Activated B cell treated with CpG ODN at 0.5 μM for 24 hours (primary cell): ENCODE measurements at regions of chr3 and their contacts with region 1.

Region 1: DNA sequence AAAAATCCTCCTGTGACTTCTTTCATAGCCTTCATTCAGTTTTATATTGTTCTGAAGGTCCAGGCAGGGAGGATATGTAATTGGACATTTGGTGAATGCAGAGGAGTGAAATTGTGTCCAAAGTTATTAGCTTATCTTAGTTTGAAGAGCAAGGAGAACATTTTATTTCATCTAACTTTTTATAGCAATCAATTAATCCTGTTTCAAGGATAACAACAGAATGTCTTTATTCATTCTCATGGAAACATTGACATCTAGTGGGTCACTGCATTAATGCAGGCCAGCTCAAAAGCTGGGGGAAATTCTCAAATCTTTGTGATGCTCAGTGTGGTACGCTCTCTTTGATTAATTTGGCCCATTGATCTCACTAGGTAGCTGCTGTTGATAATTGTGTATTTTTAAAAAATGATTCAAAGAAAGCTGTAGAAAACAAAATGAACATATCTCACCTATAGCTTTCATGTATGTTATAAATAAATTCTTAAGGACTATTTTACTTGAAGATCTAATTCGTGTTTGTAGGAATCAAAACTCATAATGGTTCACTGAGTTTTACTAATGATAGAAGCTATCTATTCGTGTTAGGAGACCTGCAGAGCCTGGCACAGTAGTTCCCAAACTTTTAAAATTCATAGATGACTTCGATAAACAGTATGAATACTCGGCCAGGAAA is 150.8 kb upstream of the KCNMB2 start:
- DNase-seq: no peak
- ATAC-seq: peak; percentile 28
- H3K4me3 Mint-ChIP-seq: no peak overlapping the region
- H3K27ac Mint-ChIP-seq: no peak overlapping the region
- H3K4me1 Mint-ChIP-seq: no peaks in the 10 kb centered on the region
- H3K27me3 Mint-ChIP-seq: no peaks in the 10 kb centered on the region
- CTCF ChIP-seq: peak; percentile 49

Region 2: DNA sequence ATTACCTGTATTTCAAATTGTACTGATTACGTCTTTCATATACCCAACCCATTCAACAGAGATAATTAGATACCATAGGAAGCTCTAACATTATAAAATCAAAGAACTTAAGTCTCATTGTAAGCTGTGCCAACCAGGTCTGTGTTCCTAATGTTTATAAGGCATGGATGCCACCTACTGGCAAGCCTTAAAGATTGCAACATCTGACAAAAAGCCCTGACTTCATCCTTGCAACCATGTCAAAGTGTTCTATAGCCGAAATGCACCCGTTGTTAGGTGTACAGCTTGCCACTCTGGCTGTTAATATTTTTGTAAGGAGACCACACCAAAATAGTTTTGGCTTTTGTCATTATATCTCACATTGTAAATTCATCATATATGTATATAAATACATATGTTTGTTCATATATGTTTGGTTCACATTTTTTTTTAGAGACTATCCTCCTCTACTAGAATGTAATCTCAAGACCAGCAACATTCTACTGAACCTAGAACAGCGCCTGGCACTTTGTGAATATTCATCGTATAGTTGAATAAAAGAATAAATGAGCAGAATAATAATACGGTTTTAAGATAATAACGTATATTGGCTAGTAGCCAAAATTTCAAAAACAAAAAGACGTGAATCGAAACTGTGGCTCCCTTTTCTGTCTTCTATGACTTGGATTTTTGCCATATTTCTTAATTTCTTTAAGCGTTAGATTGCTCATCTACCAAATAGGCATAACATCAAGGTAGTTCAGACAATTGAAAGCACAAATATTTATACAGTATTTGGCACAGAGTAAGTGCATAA is 1446.2 kb before region 1 on chr3:
- CTCF ChIA-PET with region 1: no interaction called
- POLR2A ChIA-PET with region 1: no interaction called
- intact Hi-C with region 1: loop called (anchors 2 kb)
- DNase-seq: no peak
- ATAC-seq: peak; percentile 61
- H3K4me3 Mint-ChIP-seq: no peak overlapping the region
- H3K27ac Mint-ChIP-seq: no peak overlapping the region
- H3K4me1 Mint-ChIP-seq: no peaks in the 10 kb centered on the region
- H3K27me3 Mint-ChIP-seq: no peaks in the 10 kb centered on the region
- CTCF ChIP-seq: peak; percentile 29

Region 3: DNA sequence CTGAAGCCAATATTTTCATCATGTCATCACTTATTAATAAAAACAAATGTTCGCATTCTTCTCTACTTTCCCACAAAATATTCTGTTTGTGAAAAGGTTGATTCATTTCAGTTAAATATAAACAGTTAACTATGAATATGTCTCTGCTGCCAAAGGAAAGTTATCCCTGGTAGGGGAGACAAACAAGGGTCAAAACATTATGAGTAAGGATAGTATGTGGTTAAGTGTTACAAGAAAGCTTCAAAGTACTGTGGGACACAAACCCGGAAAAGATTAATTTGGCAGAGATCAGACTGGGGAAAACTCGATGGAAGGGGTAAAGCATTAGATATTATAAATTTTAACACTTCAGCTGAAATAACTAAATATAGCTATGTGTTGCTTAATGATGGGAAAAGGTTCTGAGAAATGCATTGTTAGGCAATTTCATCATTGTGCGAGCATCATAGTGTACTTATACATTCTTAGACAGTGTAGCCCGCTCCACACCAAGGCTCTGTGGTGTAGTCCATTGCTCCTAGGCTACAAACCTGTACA is 751.7 kb before region 1 on chr3:
- CTCF ChIA-PET with region 1: no interaction called
- POLR2A ChIA-PET with region 1: no interaction called
- intact Hi-C with region 1: no loop called
- DNase-seq: no peak
- ATAC-seq: no peak
- H3K4me3 Mint-ChIP-seq: no peak overlapping the region
- H3K27ac Mint-ChIP-seq: no peak overlapping the region
- H3K4me1 Mint-ChIP-seq: no peaks in the 10 kb centered on the region
- H3K27me3 Mint-ChIP-seq: no peaks in the 10 kb centered on the region
- CTCF ChIP-seq: no peak